AG04450 (cell line): ENCODE measurements at regions of chr12 and their contacts with region 1.

Region 1: DNA sequence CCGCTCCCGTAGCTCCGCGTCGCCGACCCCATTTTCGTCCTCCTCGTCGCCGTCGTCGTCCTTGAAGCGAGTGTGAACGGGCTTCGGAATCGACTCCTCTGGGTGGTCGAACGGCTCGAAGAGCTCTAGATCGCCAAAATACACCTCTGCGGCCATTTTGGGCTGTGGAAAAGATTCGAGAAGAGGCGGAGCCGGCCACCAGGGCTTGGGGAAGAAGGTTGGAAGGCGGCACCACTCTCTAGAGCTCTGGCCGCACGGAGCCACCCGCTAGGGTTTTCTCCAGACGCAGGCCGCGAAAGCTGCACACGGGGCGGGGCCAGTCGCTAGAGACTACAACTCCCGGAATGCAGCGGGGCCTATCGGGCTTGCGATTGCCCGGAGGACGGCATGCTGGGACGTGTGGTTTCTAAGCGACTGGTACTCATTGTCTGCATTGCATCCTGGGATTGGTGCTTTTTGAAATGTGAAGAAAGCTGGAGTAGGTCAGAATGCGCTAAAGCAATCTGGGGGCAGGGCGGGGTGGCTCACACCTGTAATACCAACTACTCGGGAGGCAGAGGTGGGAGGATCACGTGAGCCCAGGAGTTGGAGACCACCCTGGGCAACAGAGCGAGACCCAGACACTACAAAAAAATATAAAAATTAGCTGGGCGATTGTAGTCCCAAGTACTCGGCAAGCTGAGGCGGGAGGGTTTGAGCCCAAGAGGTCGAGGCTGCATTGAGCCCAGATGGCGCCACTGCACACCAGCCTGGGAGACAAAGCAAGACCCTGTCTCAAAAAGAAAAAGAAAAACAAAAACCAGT is at the start of gene ZCCHC8:
- DNase-seq: peak; percentile 95
- H3K4me3 ChIP-seq: peak within 1 kb of the TSS; percentile 85
- H3K27ac ChIP-seq: peak within 1 kb of the TSS; percentile 97
- H3K27me3 ChIP-seq: no peaks in the 10 kb centered on the region
- CTCF ChIP-seq: peak; percentile 16; the same call in 1 of the 2 replicates
- polyA plus RNA-seq, gene ZCCHC8: 13.0 and 16.6 TPM in 2 replicates

Region 2: DNA sequence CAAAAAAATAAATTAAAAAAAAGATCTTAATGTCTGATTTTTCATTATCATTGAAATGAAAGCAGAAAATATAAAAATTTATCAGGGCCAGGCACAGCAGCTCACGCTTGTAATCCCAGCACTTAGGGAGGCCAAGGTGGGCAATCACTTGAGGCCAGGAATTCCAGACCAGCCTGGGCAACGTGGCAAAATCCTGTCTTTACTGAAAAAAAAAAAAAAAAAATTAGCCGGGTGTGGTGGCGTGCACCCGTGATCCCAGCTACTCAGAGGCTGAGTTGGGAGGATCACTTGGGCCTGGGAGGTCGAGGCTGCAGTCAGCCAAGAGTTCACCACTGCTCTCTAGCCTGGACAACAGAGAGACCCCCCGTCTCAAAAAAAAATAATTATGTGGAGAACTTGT is 40.8 kb before region 1 on chr12:
- CTCF ChIA-PET with region 1: no interaction called
- POLR2A ChIA-PET with region 1: no interaction called
- DNase-seq: no peak
- H3K4me3 ChIP-seq: no peak overlapping the region
- H3K27ac ChIP-seq: no peak overlapping the region
- H3K27me3 ChIP-seq: no peaks in the 10 kb centered on the region
- CTCF ChIP-seq: no peak

Region 3: DNA sequence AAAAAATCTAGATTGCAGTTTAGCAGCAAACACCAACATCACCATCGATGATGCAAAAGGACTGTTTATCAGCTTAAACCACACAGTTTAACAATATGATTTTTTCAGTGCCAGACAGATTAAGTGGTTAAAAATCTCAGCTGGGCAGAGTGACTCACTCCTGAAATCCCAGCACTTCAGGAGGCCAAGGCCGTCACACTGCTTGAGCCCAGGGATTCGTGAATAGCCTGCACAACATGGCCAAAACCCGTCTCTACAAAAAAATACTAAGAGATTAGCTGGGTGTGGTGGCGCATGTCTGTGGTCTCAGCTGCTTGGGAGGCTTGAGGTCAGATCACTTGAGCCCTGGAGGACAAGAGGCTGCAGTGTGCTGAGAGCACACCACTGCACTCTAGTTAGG is 17.0 kb after region 1 on chr12:
- CTCF ChIA-PET with region 1: interaction called, 3 read pairs
- POLR2A ChIA-PET with region 1: interaction called, 24 read pairs
- DNase-seq: peak; percentile 82
- H3K4me3 ChIP-seq: no peak overlapping the region
- H3K27ac ChIP-seq: peak overlapping the region; percentile 71
- H3K27me3 ChIP-seq: no peaks in the 10 kb centered on the region
- CTCF ChIP-seq: no peak

Region 4: GRCh38 chr12:122526683-122527477 is 26.0 kb after region 1 on chr12 and contains the starts of genes KNTC1 and RSRC2:
- CTCF ChIA-PET with region 1: no interaction called
- POLR2A ChIA-PET with region 1: interaction called, 22 read pairs
- DNase-seq: peak; percentile 99
- H3K4me3 ChIP-seq: peak within 1 kb of the TSS; percentile 89
- H3K27ac ChIP-seq: peak within 1 kb of the TSS; percentile 100
- H3K27me3 ChIP-seq: no peaks in the 10 kb centered on the region
- CTCF ChIP-seq: no peak
- polyA plus RNA-seq, gene KNTC1: 6.1 and 10.0 TPM in 2 replicates
- polyA plus RNA-seq, gene RSRC2: 29.4 and 45.9 TPM in 2 replicates